Ascending aorta (tissue), 2 donors: ENCODE measurements at regions of chr7 and their contacts with region 1.

Region 1: GRCh38 chr7:140479062-140479738 is at the start of gene MKRN1:
- DNase-seq: peak; percentile 80 to 96
- H3K4me3 ChIP-seq: peak within 1 kb of the TSS; percentile 90 to 93
- H3K27ac ChIP-seq: peak within 1 kb of the TSS; percentile 73 to 87
- H3K4me1 ChIP-seq: peaks cover 5 to 20% of the 10 kb centered on the region in 2 donors
- H3K27me3 ChIP-seq: no peaks in the 10 kb centered on the region
- CTCF ChIP-seq: no peak
- total RNA-seq, gene MKRN1: 20.6 TPM

Region 2: DNA sequence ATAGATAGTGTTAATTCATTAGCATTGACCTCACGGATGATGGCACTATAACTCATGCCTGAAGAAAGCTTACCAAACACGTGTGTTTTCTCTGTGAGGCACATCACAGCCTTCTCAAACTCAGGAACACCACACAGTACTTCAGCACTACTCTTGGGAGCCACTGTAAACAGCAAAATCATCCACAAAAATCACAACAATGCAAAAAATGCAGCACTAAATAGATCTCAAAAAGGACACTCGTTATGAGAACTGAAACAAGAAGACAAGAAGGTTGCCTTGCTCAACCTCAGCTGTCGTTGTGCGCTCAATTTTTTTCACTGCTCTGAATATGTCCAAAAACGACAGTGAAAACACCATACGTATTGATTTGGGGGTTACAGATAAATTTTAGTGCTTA is 404.4 kb before region 1 on chr7:
- intact Hi-C with region 1: no loop called
- DNase-seq: no peak
- H3K4me3 ChIP-seq: no peak overlapping the region
- H3K27ac ChIP-seq: no peak overlapping the region
- H3K4me1 ChIP-seq: no peaks in the 10 kb centered on the region
- H3K27me3 ChIP-seq: no peaks in the 10 kb centered on the region
- CTCF ChIP-seq: no peak

Region 3: GRCh38 chr7:140397784-140398750 is 81.1 kb before region 1 on chr7 and contains the start of gene SLC37A3:
- intact Hi-C with region 1: loop called (anchors 1 kb)
- DNase-seq: peak; percentile 37 to 89
- H3K4me3 ChIP-seq: peak within 1 kb of the TSS; percentile 81
- H3K27ac ChIP-seq: peak within 1 kb of the TSS; percentile 76 to 83
- H3K4me1 ChIP-seq: peaks cover 0 to 3% of the 10 kb centered on the region in 2 donors
- H3K27me3 ChIP-seq: no peaks in the 10 kb centered on the region
- CTCF ChIP-seq: peak in 1 of 3 experiments; percentile 29
- total RNA-seq, gene SLC37A3: 15.0 TPM

Region 4: GRCh38 chr7:140494867-140495266 is 15.7 kb after region 1 on chr7:
- intact Hi-C with region 1: loop called (anchors 2 kb)
- DNase-seq: no peak
- H3K4me3 ChIP-seq: no peak overlapping the region
- H3K27ac ChIP-seq: no peak overlapping the region
- H3K4me1 ChIP-seq: no peaks in the 10 kb centered on the region
- H3K27me3 ChIP-seq: no peaks in the 10 kb centered on the region
- CTCF ChIP-seq: no peak

Region 5: GRCh38 chr7:140653319-140654108 is 174.3 kb after region 1 on chr7:
- intact Hi-C with region 1: loop called (anchors 2 kb)
- DNase-seq: peak in 1 of 2 donors; percentile 77
- H3K4me3 ChIP-seq: no peak overlapping the region
- H3K27ac ChIP-seq: no peak overlapping the region
- H3K4me1 ChIP-seq: no peaks in the 10 kb centered on the region
- H3K27me3 ChIP-seq: no peaks in the 10 kb centered on the region
- CTCF ChIP-seq: peak; percentile 77 to 90 (median 82)

Region 6: GRCh38 chr7:141133646-141134045 is 654.4 kb after region 1 on chr7:
- intact Hi-C with region 1: no loop called
- DNase-seq: no peak
- H3K4me3 ChIP-seq: no peak overlapping the region
- H3K27ac ChIP-seq: no peak overlapping the region
- H3K4me1 ChIP-seq: no peaks in the 10 kb centered on the region
- H3K27me3 ChIP-seq: no peaks in the 10 kb centered on the region
- CTCF ChIP-seq: no peak